GM12878 (cell line): ENCODE measurements at regions of chr9 and their contacts with region 1.

Region 1: GRCh38 chr9:125255781-125256391 is 5.7 kb upstream of the GAPVD1 start:
- DNase-seq: no peak
- ATAC-seq: peak; percentile 76
- H3K4me3 ChIP-seq: no peak overlapping the region
- H3K27ac ChIP-seq: no peak overlapping the region
- H3K4me1 ChIP-seq: peaks cover 4% of the 10 kb centered on the region
- H3K27me3 ChIP-seq: no peaks in the 10 kb centered on the region
- CTCF ChIP-seq: peak; percentile 17 to 53 (median 41); a peak in 5 of 6 replicates
- EP300 ChIP-seq: no peak
- POLR2A ChIP-seq: no peak
- RAD21 ChIP-seq: peak; percentile 75

Region 2: DNA sequence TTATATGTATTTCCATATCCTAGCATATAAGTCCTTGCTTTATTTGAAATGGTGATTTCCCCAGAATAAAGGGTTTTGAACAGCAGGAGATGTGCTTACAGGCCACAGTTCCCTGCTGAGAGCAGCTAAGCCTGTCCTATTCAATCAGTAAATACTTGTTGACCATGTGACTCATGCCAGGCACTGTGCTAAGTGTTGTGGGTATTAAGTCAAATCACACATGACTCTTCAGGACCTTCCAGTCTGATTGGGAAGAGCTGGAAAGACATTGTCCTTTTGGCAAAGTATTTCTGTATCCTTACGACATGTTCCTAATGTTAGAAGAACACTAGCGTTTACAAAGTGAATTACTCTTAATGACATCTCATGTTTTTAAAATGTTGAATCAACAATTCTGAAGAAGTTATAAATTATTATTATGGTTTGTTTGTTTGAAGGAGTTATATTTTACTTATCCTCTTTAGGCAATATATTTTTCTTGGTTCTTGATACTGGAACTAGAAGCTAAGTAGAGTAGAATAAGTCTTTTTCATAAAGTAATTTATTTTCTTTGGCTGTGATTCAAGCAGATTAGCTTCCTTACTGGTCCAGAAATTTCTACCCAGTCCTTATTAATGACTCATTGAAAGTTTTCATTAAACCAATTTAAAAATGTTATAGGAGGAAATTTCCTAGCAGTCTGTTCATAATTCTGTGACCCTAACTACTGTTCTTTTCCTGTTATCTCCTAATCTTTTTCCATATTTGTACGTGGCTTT is 87.8 kb after region 1 on chr9:
- CTCF ChIA-PET with region 1: no interaction called
- POLR2A ChIA-PET with region 1: no interaction called
- RAD21 ChIA-PET with region 1: no interaction called
- SMC1A ChIA-PET with region 1: no interaction called
- in situ Hi-C with region 1: no loop called
- intact Hi-C with region 1: no loop called
- DNase-seq: no peak
- ATAC-seq: no peak
- H3K4me3 ChIP-seq: no peak overlapping the region
- H3K27ac ChIP-seq: no peak overlapping the region
- H3K4me1 ChIP-seq: no peaks in the 10 kb centered on the region
- H3K27me3 ChIP-seq: no peaks in the 10 kb centered on the region
- CTCF ChIP-seq: no peak
- EP300 ChIP-seq: no peak
- POLR2A ChIP-seq: no peak
- RAD21 ChIP-seq: no peak

Region 3: GRCh38 chr9:125361837-125362531 is 106.1 kb after region 1 on chr9:
- CTCF ChIA-PET with region 1: interaction called, 13 read pairs
- POLR2A ChIA-PET with region 1: interaction called, 3 read pairs
- RAD21 ChIA-PET with region 1: interaction called, 6 read pairs
- SMC1A ChIA-PET with region 1: interaction called, 9 read pairs
- in situ Hi-C with region 1: no loop called
- intact Hi-C with region 1: no loop called
- DNase-seq: no peak
- ATAC-seq: no peak
- H3K4me3 ChIP-seq: no peak overlapping the region
- H3K27ac ChIP-seq: no peak overlapping the region
- H3K4me1 ChIP-seq: no peaks in the 10 kb centered on the region; the same call in 1 of the 2 replicates
- H3K27me3 ChIP-seq: no peaks in the 10 kb centered on the region
- CTCF ChIP-seq: peak in 2 of 3 experiments; percentile 2 to 22; a peak in 1 of 6 replicates
- EP300 ChIP-seq: no peak
- POLR2A ChIP-seq: no peak
- RAD21 ChIP-seq: no peak

Region 4: GRCh38 chr9:125374443-125375309 is 118.8 kb after region 1 on chr9:
- CTCF ChIA-PET with region 1: interaction called, 5 read pairs
- POLR2A ChIA-PET with region 1: no interaction called
- RAD21 ChIA-PET with region 1: interaction called, 5 read pairs
- SMC1A ChIA-PET with region 1: interaction called, 8 read pairs
- in situ Hi-C with region 1: no loop called
- intact Hi-C with region 1: loop called (anchors 1 kb)
- DNase-seq: peak; percentile 16
- ATAC-seq: peak; percentile 98
- H3K4me3 ChIP-seq: no peak overlapping the region
- H3K27ac ChIP-seq: no peak overlapping the region
- H3K4me1 ChIP-seq: 0 out of 2 replicates have a peak, but pooled peaks cover 3% of the 10 kb centered on the region
- H3K27me3 ChIP-seq: peaks cover 0 to 2% of the 10 kb centered on the region in 2 experiments; a peak in 1 of 4 replicates
- CTCF ChIP-seq: peak; percentile 82 to 87 (median 83)
- EP300 ChIP-seq: no peak
- POLR2A ChIP-seq: no peak
- RAD21 ChIP-seq: peak; percentile 100

Region 5: DNA sequence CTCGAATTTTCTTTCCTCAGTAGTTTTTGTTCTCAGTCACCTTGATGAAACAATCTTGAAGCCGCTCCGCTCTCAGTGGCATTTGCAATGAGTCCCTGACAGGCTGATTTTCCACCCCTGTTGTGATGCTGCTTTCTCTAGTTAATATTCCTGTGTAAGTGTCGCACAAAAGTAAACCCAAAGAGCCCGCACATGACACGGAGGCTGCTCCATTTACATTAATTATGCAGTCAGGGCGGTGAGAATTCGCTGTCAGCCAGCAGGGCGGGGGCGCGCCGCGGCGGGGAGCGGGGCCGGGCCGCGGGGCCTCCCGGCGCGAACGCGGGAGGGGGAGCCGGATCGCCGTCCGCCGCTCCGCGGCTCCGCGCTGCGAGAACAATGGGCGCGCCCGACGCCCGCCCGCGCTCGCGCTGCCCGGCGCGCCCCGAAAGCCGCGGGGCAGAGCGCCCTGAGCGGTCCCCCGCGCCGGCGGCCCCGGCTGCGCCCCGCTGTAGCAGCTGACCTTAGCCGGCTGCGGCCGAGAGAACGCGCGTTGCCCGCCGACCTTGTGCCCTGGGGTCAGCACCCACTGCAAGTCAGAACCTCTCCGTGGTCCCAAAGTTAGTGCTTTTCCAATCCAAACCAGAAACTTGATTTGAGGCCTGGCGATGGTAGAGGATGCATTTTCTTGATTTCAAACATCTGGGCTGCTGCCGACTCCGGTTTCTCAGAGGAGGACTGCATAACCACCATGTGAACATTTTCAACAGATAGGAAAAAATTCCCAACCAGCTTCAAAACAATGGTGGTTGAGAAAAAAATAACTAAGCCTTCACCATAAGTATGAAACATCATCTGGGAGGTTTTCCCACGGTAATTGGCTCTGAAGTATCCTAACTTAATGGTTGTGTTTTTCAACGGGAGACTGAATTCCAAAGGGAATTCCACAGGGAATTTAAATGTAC is 633.9 kb after region 1 on chr9:
- CTCF ChIA-PET with region 1: no interaction called
- POLR2A ChIA-PET with region 1: no interaction called
- RAD21 ChIA-PET with region 1: no interaction called
- SMC1A ChIA-PET with region 1: no interaction called
- in situ Hi-C with region 1: no loop called
- intact Hi-C with region 1: no loop called
- DNase-seq: no peak
- ATAC-seq: peak; percentile 79
- H3K4me3 ChIP-seq: peak overlapping the region; percentile 89
- H3K27ac ChIP-seq: no peak overlapping the region
- H3K4me1 ChIP-seq: peaks cover 7% of the 10 kb centered on the region; the same call in 1 of the 2 replicates
- H3K27me3 ChIP-seq: no peaks in the 10 kb centered on the region
- CTCF ChIP-seq: no peak
- EP300 ChIP-seq: no peak
- POLR2A ChIP-seq: no peak
- RAD21 ChIP-seq: no peak